GM12878 (cell line): ENCODE measurements at regions of chr1 and their contacts with region 1.

Region 1: DNA sequence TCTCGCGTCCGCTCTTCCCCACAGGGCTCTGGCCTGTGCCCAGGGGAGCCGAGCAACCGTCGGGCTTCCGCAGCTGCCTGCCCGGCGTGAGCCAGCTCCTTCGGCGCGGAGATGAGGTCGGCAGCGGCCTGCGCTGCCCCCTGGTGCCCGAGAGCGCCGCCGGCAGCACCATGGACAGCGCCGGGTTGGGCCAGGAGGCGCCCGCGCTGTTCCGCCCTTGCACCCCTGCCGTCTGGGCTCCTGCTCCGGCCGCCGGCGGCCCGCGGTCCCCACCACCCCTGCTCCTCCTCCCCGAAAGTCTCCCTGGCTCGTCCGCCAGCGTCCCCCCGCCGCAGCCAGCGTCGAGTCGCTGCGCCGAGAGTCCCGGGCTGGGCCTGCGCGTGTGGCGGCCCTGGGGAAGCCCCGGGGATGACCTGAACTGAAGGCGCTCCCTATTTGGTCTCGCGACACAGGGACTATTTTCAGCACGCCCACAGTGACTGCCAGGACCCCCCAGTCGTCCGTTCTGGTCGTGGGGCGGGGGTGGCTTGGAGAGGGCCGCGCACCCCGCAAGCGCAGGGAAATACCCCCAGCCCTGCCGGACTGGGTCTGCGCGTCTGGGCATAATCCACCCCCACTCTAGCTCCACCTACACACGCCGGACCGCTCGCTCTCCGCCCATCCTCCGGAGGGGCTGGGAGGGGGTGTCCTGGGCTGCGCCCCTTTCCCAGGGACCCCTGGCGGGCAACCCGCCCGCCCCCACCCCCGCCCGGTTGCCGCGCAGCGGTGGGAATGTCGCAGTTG is 1.3 kb downstream of the HES3 start:
- DNase-seq: no peak
- ATAC-seq: peak; percentile 87
- H3K4me3 ChIP-seq: peak overlapping the region; percentile 41; the same call in 1 of the 2 replicates
- H3K27ac ChIP-seq: no peak overlapping the region
- H3K4me1 ChIP-seq: peaks cover 5% of the 10 kb centered on the region
- H3K27me3 ChIP-seq: peaks cover 17 to 26% of the 10 kb centered on the region in 2 experiments
- CTCF ChIP-seq: peak; percentile 73 to 96 (median 85)
- EP300 ChIP-seq: no peak
- POLR2A ChIP-seq: no peak
- RAD21 ChIP-seq: peak; percentile 57

Region 2: GRCh38 chr1:6082430-6082971 is 162.8 kb before region 1 on chr1:
- CTCF ChIA-PET with region 1: no interaction called
- POLR2A ChIA-PET with region 1: no interaction called
- RAD21 ChIA-PET with region 1: no interaction called
- SMC1A ChIA-PET with region 1: no interaction called
- in situ Hi-C with region 1: no loop called
- intact Hi-C with region 1: no loop called
- DNase-seq: no peak
- ATAC-seq: no peak
- H3K4me3 ChIP-seq: no peak overlapping the region
- H3K27ac ChIP-seq: no peak overlapping the region
- H3K4me1 ChIP-seq: no peaks in the 10 kb centered on the region
- H3K27me3 ChIP-seq: no peaks in the 10 kb centered on the region
- CTCF ChIP-seq: 0 out of 6 replicates have a peak, but pooled peaks of 1 of the 3 experiments have one; percentile 1
- EP300 ChIP-seq: no peak
- POLR2A ChIP-seq: no peak
- RAD21 ChIP-seq: no peak

Region 3: GRCh38 chr1:6205849-6206519 is 39.3 kb before region 1 on chr1 and contains the start of gene RNF207:
- CTCF ChIA-PET with region 1: interaction called, 17 read pairs
- POLR2A ChIA-PET with region 1: no interaction called
- RAD21 ChIA-PET with region 1: interaction called, 5 read pairs
- SMC1A ChIA-PET with region 1: no interaction called
- in situ Hi-C with region 1: no loop called
- intact Hi-C with region 1: no loop called
- DNase-seq: no peak
- ATAC-seq: peak; percentile 84
- H3K4me3 ChIP-seq: peak within 1 kb of the TSS; percentile 75
- H3K27ac ChIP-seq: peak within 1 kb of the TSS; percentile 88
- H3K4me1 ChIP-seq: peaks cover 18% of the 10 kb centered on the region
- H3K27me3 ChIP-seq: no peaks in the 10 kb centered on the region
- CTCF ChIP-seq: no peak
- EP300 ChIP-seq: no peak
- POLR2A ChIP-seq: peak; percentile 92
- RAD21 ChIP-seq: no peak
- polyA plus RNA-seq, gene RNF207: 1.7 to 3.6 TPM

Region 4: GRCh38 chr1:6343506-6344405 is 98.5 kb after region 1 on chr1:
- CTCF ChIA-PET with region 1: interaction called, 47 read pairs
- POLR2A ChIA-PET with region 1: no interaction called
- RAD21 ChIA-PET with region 1: interaction called, 32 read pairs
- SMC1A ChIA-PET with region 1: interaction called, 7 read pairs
- in situ Hi-C with region 1: loop called (anchors 5 kb)
- intact Hi-C with region 1: loop called (anchors 1 kb)
- DNase-seq: no peak
- ATAC-seq: peak; percentile 94
- H3K4me3 ChIP-seq: no peak overlapping the region
- H3K27ac ChIP-seq: no peak overlapping the region
- H3K4me1 ChIP-seq: peaks cover 6% of the 10 kb centered on the region; the same call in 1 of the 2 replicates
- H3K27me3 ChIP-seq: no peaks in the 10 kb centered on the region
- CTCF ChIP-seq: peak; percentile 85 to 99 (median 87); a peak in 5 of 6 replicates
- EP300 ChIP-seq: no peak
- POLR2A ChIP-seq: no peak
- RAD21 ChIP-seq: peak; percentile 97

Region 5: GRCh38 chr1:6408023-6408422 is 162.7 kb after region 1 on chr1:
- CTCF ChIA-PET with region 1: interaction called, 14 read pairs
- POLR2A ChIA-PET with region 1: no interaction called
- RAD21 ChIA-PET with region 1: interaction called, 15 read pairs
- SMC1A ChIA-PET with region 1: no interaction called
- in situ Hi-C with region 1: loop called (anchors 5 kb)
- intact Hi-C with region 1: loop called (anchors 2 kb)
- DNase-seq: no peak
- ATAC-seq: no peak
- H3K4me3 ChIP-seq: no peak overlapping the region
- H3K27ac ChIP-seq: no peak overlapping the region
- H3K4me1 ChIP-seq: no peaks in the 10 kb centered on the region
- H3K27me3 ChIP-seq: no peaks in the 10 kb centered on the region
- CTCF ChIP-seq: no peak
- EP300 ChIP-seq: no peak
- POLR2A ChIP-seq: no peak
- RAD21 ChIP-seq: no peak

Region 6: GRCh38 chr1:6438047-6438525 is 192.8 kb after region 1 on chr1:
- CTCF ChIA-PET with region 1: interaction called, 29 read pairs
- POLR2A ChIA-PET with region 1: no interaction called
- RAD21 ChIA-PET with region 1: interaction called, 3 read pairs
- SMC1A ChIA-PET with region 1: interaction called, 7 read pairs
- in situ Hi-C with region 1: no loop called
- intact Hi-C with region 1: loop called (anchors 2 kb)
- DNase-seq: peak; percentile 12
- ATAC-seq: peak; percentile 86
- H3K4me3 ChIP-seq: no peak overlapping the region
- H3K27ac ChIP-seq: no peak overlapping the region
- H3K4me1 ChIP-seq: no peaks in the 10 kb centered on the region
- H3K27me3 ChIP-seq: no peaks in the 10 kb centered on the region; a peak in 1 of 4 replicates
- CTCF ChIP-seq: peak; percentile 86 to 96 (median 87)
- EP300 ChIP-seq: no peak
- POLR2A ChIP-seq: no peak
- RAD21 ChIP-seq: peak; percentile 67